ENCODE measurements at regions of chr2 and their contacts with region 1.

Region 1: GRCh38 chr2:12931186-12931844 is 214.6 kb downstream of the TRIB2 start:
- DNase-seq: peak; percentile 35
- H3K4me3 ChIP-seq: no peak overlapping the region
- H3K27ac ChIP-seq: no peak overlapping the region
- H3K4me1 ChIP-seq: peaks cover 23% of the 10 kb centered on the region
- H3K27me3 ChIP-seq: no peaks in the 10 kb centered on the region
- CTCF ChIP-seq: peak; percentile 88 to 96

Region 2: GRCh38 chr2:12416600-12416999 is 514.7 kb before region 1 on chr2:
- CTCF ChIA-PET with region 1: no interaction called
- dilution Hi-C with region 1: no loop called
- in situ Hi-C with region 1: loop called in 1 of 2 experiments (anchors 25 kb)
- intact Hi-C with region 1: loop called (anchors 1 kb)
- DNase-seq: no peak
- H3K4me3 ChIP-seq: no peak overlapping the region
- H3K27ac ChIP-seq: no peak overlapping the region
- H3K4me1 ChIP-seq: no peaks in the 10 kb centered on the region
- H3K27me3 ChIP-seq: peaks cover 2% of the 10 kb centered on the region
- CTCF ChIP-seq: peak; percentile 38 to 50

Region 3: GRCh38 chr2:12430407-12431133 is 500.7 kb before region 1 on chr2:
- CTCF ChIA-PET with region 1: no interaction called
- dilution Hi-C with region 1: no loop called
- in situ Hi-C with region 1: no loop called
- intact Hi-C with region 1: loop called (anchors 1 kb)
- DNase-seq: no peak
- H3K4me3 ChIP-seq: no peak overlapping the region
- H3K27ac ChIP-seq: no peak overlapping the region
- H3K4me1 ChIP-seq: no peaks in the 10 kb centered on the region
- H3K27me3 ChIP-seq: no peaks in the 10 kb centered on the region
- CTCF ChIP-seq: no peak

Region 4: GRCh38 chr2:12819103-12819475 is 112.2 kb before region 1 on chr2:
- CTCF ChIA-PET with region 1: no interaction called
- dilution Hi-C with region 1: no loop called
- in situ Hi-C with region 1: no loop called
- intact Hi-C with region 1: loop called (anchors 1 kb)
- DNase-seq: peak; percentile 85
- H3K4me3 ChIP-seq: no peak overlapping the region
- H3K27ac ChIP-seq: no peak overlapping the region
- H3K4me1 ChIP-seq: peaks cover 39% of the 10 kb centered on the region
- H3K27me3 ChIP-seq: no peaks in the 10 kb centered on the region
- CTCF ChIP-seq: no peak